ENCODE measurements at regions of chr3 and their contacts with region 1.

Region 1: GRCh38 chr3:39499651-39500240 is 32.3 kb downstream of the MOBP start:
- DNase-seq: no peak
- H3K4me3 ChIP-seq: no peak overlapping the region
- CTCF ChIP-seq: no peak

Region 2: GRCh38 chr3:39414421-39414907 is 85.3 kb before region 1 on chr3:
- CTCF ChIA-PET with region 1: interaction called, 51 read pairs
- POLR2A ChIA-PET with region 1: no interaction called
- DNase-seq: no peak
- H3K4me3 ChIP-seq: no peak overlapping the region
- CTCF ChIP-seq: no peak

Region 3: GRCh38 chr3:39479701-39480414 is 19.9 kb before region 1 on chr3:
- CTCF ChIA-PET with region 1: interaction called, 12 read pairs
- POLR2A ChIA-PET with region 1: no interaction called
- DNase-seq: no peak
- H3K4me3 ChIP-seq: no peak overlapping the region
- CTCF ChIP-seq: no peak

Region 4: DNA sequence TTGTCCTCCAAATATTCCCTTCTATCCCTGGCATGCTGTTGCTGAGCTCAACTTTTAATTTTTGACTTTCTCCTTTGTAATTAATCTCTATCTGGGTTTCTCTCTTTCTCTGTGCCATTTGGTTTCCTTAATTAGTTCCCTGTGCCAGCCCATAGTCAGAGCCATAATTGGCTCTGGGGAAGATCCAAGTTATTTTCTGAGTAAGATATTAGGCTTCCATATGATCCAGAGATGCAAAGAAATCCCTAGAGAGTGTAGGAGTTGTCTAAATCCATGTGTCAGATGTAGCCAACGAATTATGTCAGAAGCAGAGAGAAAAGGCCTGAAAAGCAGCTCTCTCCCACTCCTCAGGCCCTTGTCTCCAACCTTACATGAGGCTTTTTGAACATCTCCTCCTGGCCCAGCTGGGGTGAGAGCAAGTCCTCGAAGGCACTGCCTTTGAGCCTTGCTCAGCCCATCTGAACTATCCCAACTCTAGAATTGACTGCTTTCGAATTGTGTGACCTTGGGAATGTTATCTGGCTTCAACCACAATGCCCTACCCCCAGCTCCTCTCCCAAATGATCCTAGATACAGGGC is 14.1 kb after region 1 on chr3:
- CTCF ChIA-PET with region 1: interaction called, 20 read pairs
- POLR2A ChIA-PET with region 1: no interaction called
- DNase-seq: no peak
- H3K4me3 ChIP-seq: no peak overlapping the region
- CTCF ChIP-seq: no peak

Measured in AG04449 (cell line).